ENCODE measurements at regions of chr5 and their contacts with region 1.

Region 1: DNA sequence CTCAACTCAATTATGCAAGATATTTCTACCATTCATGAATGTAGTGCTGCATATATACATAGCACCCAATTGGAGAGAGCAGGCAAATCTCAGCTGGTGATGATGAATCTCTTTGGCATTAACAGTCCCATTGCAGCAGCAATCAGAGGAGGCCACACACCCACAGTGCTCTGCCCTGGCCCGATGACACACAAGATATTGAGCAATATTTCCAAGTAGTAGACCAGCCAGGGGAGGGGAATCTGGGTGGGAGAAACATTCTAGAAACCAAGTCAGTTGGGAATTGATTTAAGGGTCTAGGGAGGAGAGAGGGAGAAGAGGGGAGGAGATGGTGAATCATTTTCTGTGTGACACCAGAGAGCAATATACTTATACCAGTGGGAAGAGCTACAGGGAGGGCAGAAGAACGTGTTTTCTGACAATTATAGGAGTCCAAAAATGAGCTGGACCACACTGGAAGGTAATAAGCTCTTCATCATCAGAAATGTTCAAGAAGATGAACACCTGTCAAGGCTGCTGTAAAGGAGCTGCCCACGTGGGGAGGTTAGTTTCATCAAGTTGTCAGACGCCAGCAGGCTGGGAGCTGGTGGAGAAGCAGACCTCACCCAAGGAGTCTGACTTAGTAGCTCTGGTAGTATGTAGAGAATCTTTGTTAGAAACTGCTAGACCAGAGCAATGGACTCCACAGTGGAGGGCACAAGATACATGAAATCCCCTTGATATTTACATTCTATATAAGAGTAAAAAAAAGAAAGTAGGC is 15.1 kb upstream of the C5orf63 start:
- DNase-seq: peak; percentile 99
- H3K4me3 Mint-ChIP-seq: no peak overlapping the region
- H3K27ac Mint-ChIP-seq: peak overlapping the region; percentile 80
- H3K4me1 Mint-ChIP-seq: peaks cover 31% of the 10 kb centered on the region
- H3K27me3 Mint-ChIP-seq: no peaks in the 10 kb centered on the region
- CTCF ChIP-seq: no peak

Region 2: GRCh38 chr5:126965061-126965475 is 123.4 kb before region 1 on chr5:
- CTCF ChIA-PET with region 1: interaction called, 3 read pairs
- POLR2A ChIA-PET with region 1: no interaction called
- intact Hi-C with region 1: loop called (anchors 5 kb)
- DNase-seq: peak; percentile 77
- H3K4me3 Mint-ChIP-seq: no peak overlapping the region
- H3K27ac Mint-ChIP-seq: peak overlapping the region; percentile 36
- H3K4me1 Mint-ChIP-seq: peaks cover 30% of the 10 kb centered on the region
- H3K27me3 Mint-ChIP-seq: no peaks in the 10 kb centered on the region
- CTCF ChIP-seq: no peak

Region 3: DNA sequence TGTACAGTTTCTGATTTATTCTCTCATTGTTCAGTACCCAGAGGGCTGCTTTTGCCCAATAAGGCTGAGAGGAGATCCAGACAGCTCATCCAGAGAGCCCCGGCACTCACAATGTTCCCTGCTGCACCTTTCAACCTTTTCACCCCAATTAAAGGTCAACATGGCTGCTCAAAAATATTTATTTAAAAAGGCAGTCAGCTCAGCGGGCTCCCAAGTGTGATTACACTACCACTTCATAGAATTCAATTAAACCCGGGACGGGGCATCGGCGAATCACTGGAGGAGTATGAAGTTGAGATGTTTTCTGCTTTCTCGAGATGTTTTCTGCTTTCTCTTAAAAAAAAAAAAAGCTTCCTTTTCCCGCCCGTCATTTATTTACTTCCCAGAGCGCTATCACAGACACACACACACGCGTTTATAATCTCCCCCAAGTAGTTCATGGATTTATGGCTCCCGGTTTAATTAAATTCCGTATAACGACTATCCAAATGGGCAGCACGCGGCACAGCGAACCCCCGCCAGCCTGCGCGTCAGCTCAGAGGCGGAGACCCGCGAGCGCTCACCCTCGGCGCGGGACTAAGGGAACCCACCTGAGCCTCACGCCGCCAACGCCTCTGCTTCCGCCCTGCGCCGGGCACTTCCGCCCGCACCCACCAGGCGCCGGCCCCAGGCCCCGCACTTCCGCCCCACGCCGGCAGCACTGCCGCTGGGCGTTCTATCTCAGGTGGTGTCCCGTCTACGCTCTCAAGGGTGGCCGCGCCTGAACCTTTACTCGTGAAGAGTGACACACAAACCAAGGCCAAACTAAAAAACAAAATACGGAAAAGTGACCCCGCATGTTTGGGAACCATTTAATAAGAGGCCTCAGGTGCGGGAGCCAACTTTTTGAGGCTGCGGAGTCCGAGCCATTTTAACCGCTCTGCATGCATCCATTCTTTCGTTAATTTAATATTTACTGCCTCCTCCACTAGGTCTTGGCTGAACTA is 15.3 kb before region 1 on chr5 and contains the start of gene C5orf63:
- CTCF ChIA-PET with region 1: interaction called, 14 read pairs
- POLR2A ChIA-PET with region 1: interaction called, 16 read pairs
- intact Hi-C with region 1: no loop called
- DNase-seq: peak; percentile 58
- H3K4me3 Mint-ChIP-seq: peak within 1 kb of the TSS; percentile 85
- H3K27ac Mint-ChIP-seq: peak within 1 kb of the TSS; percentile 95
- H3K4me1 Mint-ChIP-seq: peaks cover 19% of the 10 kb centered on the region
- H3K27me3 Mint-ChIP-seq: no peaks in the 10 kb centered on the region
- CTCF ChIP-seq: peak; percentile 13
- total RNA-seq, gene C5orf63: 10.8 and 11.1 TPM in 2 replicates